ENCODE measurements at regions of chr15 and their contacts with region 1.

Region 1: GRCh38 chr15:51374131-51374530 is 32.7 kb downstream of the GLDN start:
- DNase-seq: no peak
- ATAC-seq: no peak
- H3K4me3 ChIP-seq: no peak overlapping the region
- H3K27ac ChIP-seq: no peak overlapping the region
- H3K4me1 ChIP-seq: peaks cover 0 to 2% (median 0%) of the 10 kb centered on the region in 9 donors
- H3K27me3 ChIP-seq: no peaks in the 10 kb centered on the region
- CTCF ChIP-seq: no peak

Region 2: DNA sequence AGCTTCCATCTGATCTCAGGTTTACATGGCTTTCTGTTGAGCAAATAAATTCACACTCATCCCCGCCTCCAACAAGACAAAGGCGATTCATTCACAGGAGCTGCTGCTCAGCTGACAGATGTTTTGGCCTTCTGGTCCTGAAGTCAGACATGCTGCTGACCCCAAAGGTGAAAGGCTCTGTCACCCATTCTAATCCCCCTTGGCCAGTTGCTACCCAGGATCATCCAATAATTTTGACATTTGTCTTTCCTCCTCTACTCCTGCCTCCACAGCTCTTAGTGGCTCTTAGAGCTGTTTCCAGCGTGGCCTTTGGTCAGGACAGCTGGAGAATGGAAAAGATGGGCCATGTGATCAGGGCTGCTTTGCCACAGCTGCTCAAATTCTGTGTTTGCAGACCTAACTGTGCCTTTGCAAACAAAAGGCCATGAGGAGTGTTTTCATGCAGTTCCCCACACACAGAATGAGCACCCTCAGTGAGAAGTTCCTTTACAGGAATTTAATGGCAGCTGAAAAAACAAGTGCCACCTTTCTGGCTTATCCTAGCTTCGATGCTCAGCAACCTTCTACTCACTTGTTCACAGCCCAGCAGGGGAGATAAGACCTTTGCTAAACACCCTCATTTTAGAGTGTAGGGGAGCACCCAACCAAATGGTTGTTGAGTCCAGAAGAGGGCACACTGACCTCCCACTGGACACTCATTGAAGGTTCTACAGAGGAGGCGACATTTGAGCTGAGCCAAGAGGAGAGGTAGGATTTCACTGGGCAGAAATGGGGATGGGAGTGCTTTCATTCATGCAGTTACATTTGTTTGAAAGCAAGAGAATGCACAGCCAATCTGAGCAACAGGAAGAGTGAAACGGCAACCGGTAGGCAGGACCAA is 74.7 kb before region 1 on chr15:
- intact Hi-C with region 1: loop called in 1 of 10 experiments (anchors 5 kb)
- DNase-seq: no peak
- ATAC-seq: peak in 4 of 8 donors; percentile 35 to 60 (median 45)
- H3K4me3 ChIP-seq: no peak overlapping the region
- H3K27ac ChIP-seq: peak overlapping the region in 3 of 10 donors; percentile 1 to 56 (median 17)
- H3K4me1 ChIP-seq: peaks cover 0 to 19% (median 8%) of the 10 kb centered on the region in 9 donors
- H3K27me3 ChIP-seq: no peaks in the 10 kb centered on the region
- CTCF ChIP-seq: no peak

Region 3: DNA sequence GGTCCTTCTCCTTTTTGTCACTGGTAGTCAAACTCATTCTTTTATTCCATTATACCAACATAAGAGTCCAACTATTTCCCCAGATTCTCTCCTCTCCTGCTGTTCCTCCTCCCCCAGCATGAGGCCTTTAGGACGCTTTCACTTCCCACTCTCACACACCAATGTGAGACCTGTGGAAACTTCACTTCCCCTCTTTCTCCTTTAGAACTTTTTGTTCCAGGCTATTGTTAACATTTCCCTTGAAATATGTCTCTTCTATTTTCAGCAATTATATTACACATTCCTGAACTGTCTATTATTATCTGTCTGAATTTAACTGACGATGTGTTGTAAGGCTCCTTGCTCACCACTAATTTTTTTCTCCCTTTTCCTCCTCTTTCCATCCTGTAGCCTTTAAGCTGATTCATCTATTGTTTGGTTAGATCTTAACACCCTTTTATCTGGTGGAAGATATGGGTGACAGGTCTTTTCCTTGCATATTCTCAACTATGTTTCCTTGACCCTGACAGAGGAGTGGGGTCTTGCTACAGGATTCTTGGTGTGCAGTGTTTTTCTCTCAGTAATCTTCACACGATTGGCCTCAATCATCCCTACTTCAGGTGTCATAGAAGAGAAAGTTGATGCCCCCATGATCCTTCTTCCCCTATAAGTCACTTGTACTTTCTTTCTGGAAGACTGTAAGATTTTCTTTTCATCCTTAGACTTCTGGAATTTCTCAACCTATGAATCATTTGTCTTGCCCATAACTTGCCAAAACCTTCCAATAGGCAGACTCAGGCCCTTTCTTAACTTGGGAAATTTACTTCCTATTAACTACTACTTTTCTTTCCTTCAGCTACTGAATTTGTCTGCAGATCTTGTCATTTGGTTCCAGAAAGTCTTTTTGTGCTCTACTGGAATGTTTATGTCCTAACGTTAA is 41.7 kb before region 1 on chr15:
- intact Hi-C with region 1: loop called in 1 of 10 experiments (anchors 5 kb)
- DNase-seq: no peak
- ATAC-seq: peak in 3 of 8 donors; percentile 26 to 45 (median 33)
- H3K4me3 ChIP-seq: no peak overlapping the region
- H3K27ac ChIP-seq: peak overlapping the region in 1 of 10 donors; percentile 4
- H3K4me1 ChIP-seq: peaks cover 6 to 69% (median 44%) of the 10 kb centered on the region in 9 donors
- H3K27me3 ChIP-seq: no peaks in the 10 kb centered on the region
- CTCF ChIP-seq: no peak

Region 4: GRCh38 chr15:51658670-51659069 is 284.5 kb after region 1 on chr15:
- intact Hi-C with region 1: no loop called
- DNase-seq: no peak
- ATAC-seq: no peak
- H3K4me3 ChIP-seq: no peak overlapping the region
- H3K27ac ChIP-seq: no peak overlapping the region
- H3K4me1 ChIP-seq: no peaks in the 10 kb centered on the region
- H3K27me3 ChIP-seq: no peaks in the 10 kb centered on the region
- CTCF ChIP-seq: no peak